Calu3 (cell line): ENCODE measurements at regions of chr6 and their contacts with region 1.

Region 1: GRCh38 chr6:116827561-116828240 is 1.2 kb downstream of the GPRC6A start:
- DNase-seq: no peak
- H3K4me3 Mint-ChIP-seq: no peak overlapping the region
- H3K27ac Mint-ChIP-seq: no peak overlapping the region
- H3K4me1 Mint-ChIP-seq: no peaks in the 10 kb centered on the region
- H3K27me3 Mint-ChIP-seq: no peaks in the 10 kb centered on the region
- CTCF ChIP-seq: no peak

Region 2: GRCh38 chr6:116371120-116371917 is 456.4 kb before region 1 on chr6:
- CTCF ChIA-PET with region 1: no interaction called
- intact Hi-C with region 1: no loop called
- DNase-seq: peak; percentile 69
- H3K4me3 Mint-ChIP-seq: peak overlapping the region; percentile 84
- H3K27ac Mint-ChIP-seq: peak overlapping the region; percentile 42
- H3K4me1 Mint-ChIP-seq: peaks cover 21% of the 10 kb centered on the region
- H3K27me3 Mint-ChIP-seq: no peaks in the 10 kb centered on the region
- CTCF ChIP-seq: no peak

Region 3: GRCh38 chr6:116500969-116501433 is 326.7 kb before region 1 on chr6:
- CTCF ChIA-PET with region 1: no interaction called
- intact Hi-C with region 1: no loop called
- DNase-seq: peak; percentile 65
- H3K4me3 Mint-ChIP-seq: peak overlapping the region; percentile 59
- H3K27ac Mint-ChIP-seq: no peak overlapping the region
- H3K4me1 Mint-ChIP-seq: peaks cover 17% of the 10 kb centered on the region
- H3K27me3 Mint-ChIP-seq: peaks cover 24% of the 10 kb centered on the region
- CTCF ChIP-seq: no peak

Region 4: DNA sequence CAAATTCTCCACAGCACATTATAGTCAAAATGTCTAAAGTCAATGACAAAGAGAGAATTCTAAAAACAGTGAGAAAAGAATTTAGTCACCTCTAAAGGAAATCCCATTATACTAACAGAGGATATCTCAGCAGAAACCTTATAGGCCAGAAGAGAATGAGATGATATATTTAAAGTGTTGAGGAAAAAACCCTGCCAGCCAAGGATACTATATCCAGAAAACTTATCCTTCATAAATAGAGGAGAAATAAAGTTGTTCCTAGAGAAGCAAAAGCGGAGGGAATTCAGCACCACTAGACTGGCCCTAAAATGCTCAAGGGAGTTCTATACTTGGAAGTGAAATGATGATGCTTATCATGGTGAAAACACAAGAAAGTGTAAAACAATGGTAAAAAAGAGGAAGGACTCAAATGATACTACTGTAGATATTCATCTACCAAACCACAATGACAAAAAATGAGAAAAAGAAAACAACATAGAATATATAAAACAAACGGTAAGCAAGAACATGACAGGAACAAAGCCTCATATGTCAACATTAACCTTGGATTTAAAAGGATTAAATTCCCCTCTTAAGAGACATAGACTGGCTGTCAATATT is 15.6 kb before region 1 on chr6:
- CTCF ChIA-PET with region 1: no interaction called
- intact Hi-C with region 1: loop called (anchors 1 kb)
- DNase-seq: no peak
- H3K4me3 Mint-ChIP-seq: no peak overlapping the region
- H3K27ac Mint-ChIP-seq: no peak overlapping the region
- H3K4me1 Mint-ChIP-seq: no peaks in the 10 kb centered on the region
- H3K27me3 Mint-ChIP-seq: no peaks in the 10 kb centered on the region
- CTCF ChIP-seq: no peak